ENCODE measurements at regions of chr6 and their contacts with region 1.

Region 1: GRCh38 chr6:41920921-41921711 is at the starts of genes BYSL and MED20:
- DNase-seq: peak; percentile 96
- H3K4me3 ChIP-seq: peak within 1 kb of the TSS; percentile 92
- H3K27ac ChIP-seq: peak within 1 kb of the TSS; percentile 74
- H3K4me1 ChIP-seq: peaks cover 25% of the 10 kb centered on the region
- CTCF ChIP-seq: peak; percentile 97
- total RNA-seq, gene BYSL: 36.1 and 41.9 TPM in 2 replicates
- total RNA-seq, gene MED20: 27.7 and 30.7 TPM in 2 replicates

Region 2: DNA sequence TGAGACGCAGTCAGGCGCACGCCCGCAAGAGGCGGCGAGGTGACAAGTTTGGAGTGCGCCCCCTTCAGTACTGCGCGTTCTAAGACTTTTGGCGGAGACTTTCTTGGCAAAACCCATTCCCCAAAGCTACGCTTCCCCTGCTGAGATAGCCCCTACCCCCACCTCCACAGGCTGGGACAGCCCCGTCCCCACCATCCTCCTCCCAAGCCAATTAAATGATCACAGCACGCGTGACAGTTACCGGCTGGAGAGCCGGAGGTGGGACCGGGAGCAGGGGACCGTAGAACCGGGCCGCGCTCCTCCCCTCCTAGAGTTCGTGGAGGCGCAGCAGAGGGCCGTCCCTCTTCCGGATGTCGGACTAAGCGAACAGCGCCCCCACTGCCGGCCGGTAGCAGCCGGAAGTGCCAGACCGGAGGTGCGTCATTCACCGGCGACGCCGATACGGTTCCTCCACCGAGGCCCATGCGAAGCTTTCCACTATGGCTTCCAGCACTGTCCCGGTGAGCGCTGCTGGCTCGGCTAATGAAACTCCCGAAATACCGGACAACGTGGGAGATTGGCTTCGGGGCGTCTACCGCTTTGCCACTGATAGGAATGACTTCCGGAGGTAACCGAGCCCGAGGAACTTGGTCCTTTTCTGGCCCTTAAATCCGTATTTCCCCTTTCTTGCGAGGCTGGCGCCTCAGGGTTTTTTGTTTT is 133.7 kb before region 1 on chr6 and contains the start of gene TOMM6:
- CTCF ChIA-PET with region 1: interaction called, 4 read pairs
- POLR2A ChIA-PET with region 1: interaction called, 5 read pairs
- intact Hi-C with region 1: loop called (anchors 1 kb)
- DNase-seq: peak; percentile 97
- H3K4me3 ChIP-seq: peak within 1 kb of the TSS; percentile 86
- H3K27ac ChIP-seq: peak within 1 kb of the TSS; percentile 81
- H3K4me1 ChIP-seq: peaks cover 39% of the 10 kb centered on the region
- CTCF ChIP-seq: peak; percentile 81
- total RNA-seq, gene TOMM6: 84.9 and 131 TPM in 2 replicates

Region 3: GRCh38 chr6:41846666-41847237 is 74.4 kb before region 1 on chr6:
- CTCF ChIA-PET with region 1: no interaction called
- POLR2A ChIA-PET with region 1: no interaction called
- intact Hi-C with region 1: loop called (anchors 5 kb)
- DNase-seq: peak; percentile 60
- H3K4me3 ChIP-seq: no peak overlapping the region
- H3K27ac ChIP-seq: no peak overlapping the region
- H3K4me1 ChIP-seq: peaks cover 7% of the 10 kb centered on the region
- CTCF ChIP-seq: peak; percentile 94

Region 4: GRCh38 chr6:41895300-41896233 is 25.5 kb before region 1 on chr6 and contains the start of gene USP49:
- CTCF ChIA-PET with region 1: interaction called, 11 read pairs
- POLR2A ChIA-PET with region 1: interaction called, 15 read pairs
- intact Hi-C with region 1: no loop called
- DNase-seq: peak; percentile 92
- H3K4me3 ChIP-seq: peak within 1 kb of the TSS; percentile 88
- H3K27ac ChIP-seq: peak within 1 kb of the TSS; percentile 83
- H3K4me1 ChIP-seq: peaks cover 29% of the 10 kb centered on the region
- CTCF ChIP-seq: no peak
- total RNA-seq, gene USP49: 7.4 and 9.0 TPM in 2 replicates

Region 5: GRCh38 chr6:41936073-41936837 is 15.1 kb after region 1 on chr6:
- CTCF ChIA-PET with region 1: interaction called, 10 read pairs
- POLR2A ChIA-PET with region 1: interaction called, 9 read pairs
- intact Hi-C with region 1: no loop called
- DNase-seq: peak; percentile 81
- H3K4me3 ChIP-seq: peak overlapping the region; percentile 93
- H3K27ac ChIP-seq: peak overlapping the region; percentile 82
- H3K4me1 ChIP-seq: peaks cover 66% of the 10 kb centered on the region
- CTCF ChIP-seq: peak; percentile 86

Region 6: DNA sequence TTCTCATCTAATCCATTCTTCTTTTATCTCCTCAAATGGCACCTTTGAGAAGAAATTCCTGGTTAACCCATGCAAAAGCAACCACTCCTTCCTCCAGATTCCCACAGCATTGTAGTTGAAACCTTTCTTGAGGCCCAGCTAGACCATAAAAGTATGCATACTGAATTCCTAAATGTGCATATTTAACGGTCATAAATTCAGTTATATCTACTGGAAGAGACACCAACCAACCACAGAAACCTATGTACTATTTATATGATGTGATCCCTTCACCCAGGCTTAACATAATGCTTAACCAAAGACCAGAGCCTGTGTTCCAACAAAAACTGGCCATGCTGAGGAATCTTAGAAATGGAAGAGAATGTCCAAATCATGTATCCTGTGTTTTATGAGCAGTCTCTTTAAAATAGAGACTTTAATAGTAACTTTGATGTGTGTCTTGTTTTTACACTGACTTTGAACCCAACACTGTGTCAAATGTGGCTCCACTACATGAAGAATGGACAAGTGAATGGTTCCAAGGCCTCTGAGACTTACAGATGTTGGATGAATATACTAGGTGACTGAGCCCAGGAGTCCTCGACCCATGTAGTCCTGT is 117.8 kb after region 1 on chr6:
- CTCF ChIA-PET with region 1: interaction called, 10 read pairs
- POLR2A ChIA-PET with region 1: interaction called, 15 read pairs
- intact Hi-C with region 1: loop called (anchors 1 kb)
- DNase-seq: no peak
- H3K4me3 ChIP-seq: peak overlapping the region; percentile 50
- H3K27ac ChIP-seq: peak overlapping the region; percentile 84
- H3K4me1 ChIP-seq: peaks cover 65% of the 10 kb centered on the region
- CTCF ChIP-seq: no peak

Measured in OCI-LY7 (cell line).